Common myeloid progenitor, CD34-positive (primary cell): ENCODE measurements at regions of chr3 and their contacts with region 1.

Region 1: DNA sequence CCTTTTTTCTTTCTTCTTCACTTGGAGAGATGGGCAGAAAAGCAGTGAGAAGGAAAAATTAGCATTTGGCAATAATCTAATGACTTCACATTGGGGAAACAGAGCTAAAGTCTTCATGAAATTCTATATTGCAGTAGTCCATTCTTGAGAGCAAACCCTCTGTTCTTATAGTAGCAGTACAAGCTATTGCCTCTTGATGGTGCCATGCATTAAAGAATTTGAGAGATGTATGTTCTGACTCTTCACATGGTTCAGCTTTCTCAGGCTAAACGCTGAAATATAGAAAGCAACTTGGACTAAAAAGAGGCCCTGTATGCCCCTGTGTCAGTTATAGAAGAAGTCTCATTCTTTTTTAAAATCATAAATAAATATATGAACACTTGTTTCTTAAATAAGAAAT is 36.0 kb downstream of the PHLDB2 start:
- DNase-seq: peak; percentile 72 to 83 (median 81)
- H3K4me3 ChIP-seq: no peak overlapping the region
- H3K27ac ChIP-seq: no peak overlapping the region
- H3K4me1 ChIP-seq: no peaks in the 10 kb centered on the region
- H3K27me3 ChIP-seq: no peaks in the 10 kb centered on the region

Region 2: GRCh38 chr3:111910806-111911205 is 15.7 kb after region 1 on chr3:
- CTCF ChIA-PET with region 1: interaction called, 17 read pairs
- POLR2A ChIA-PET with region 1: no interaction called
- DNase-seq: peak in 2 of 3 donors; percentile 36 to 37
- H3K4me3 ChIP-seq: no peak overlapping the region
- H3K27ac ChIP-seq: no peak overlapping the region
- H3K4me1 ChIP-seq: peaks cover 0 to 17% (median 2%) of the 10 kb centered on the region in 4 experiments
- H3K27me3 ChIP-seq: no peaks in the 10 kb centered on the region

Region 3: GRCh38 chr3:112605285-112605684 is 710.2 kb after region 1 on chr3:
- CTCF ChIA-PET with region 1: no interaction called
- POLR2A ChIA-PET with region 1: no interaction called
- DNase-seq: peak; percentile 19 to 88 (median 87)
- H3K4me3 ChIP-seq: peak overlapping the region in 1 of 7 experiments; percentile 7
- H3K27ac ChIP-seq: no peak overlapping the region
- H3K4me1 ChIP-seq: peaks cover 0 to 12% (median 8%) of the 10 kb centered on the region in 4 experiments
- H3K27me3 ChIP-seq: peaks cover 0 to 1% (median 0%) of the 10 kb centered on the region in 5 experiments